ENCODE measurements at regions of chr3 and their contacts with region 1.

Region 1: GRCh38 chr3:43638594-43639447 is 17.0 kb upstream of the ANO10 start:
- DNase-seq: peak; percentile 79
- H3K4me3 Mint-ChIP-seq: peak overlapping the region; percentile 55
- H3K27ac Mint-ChIP-seq: peak overlapping the region; percentile 69
- H3K4me1 Mint-ChIP-seq: peaks cover 8% of the 10 kb centered on the region
- H3K27me3 Mint-ChIP-seq: no peaks in the 10 kb centered on the region
- CTCF ChIP-seq: peak; percentile 49

Region 2: DNA sequence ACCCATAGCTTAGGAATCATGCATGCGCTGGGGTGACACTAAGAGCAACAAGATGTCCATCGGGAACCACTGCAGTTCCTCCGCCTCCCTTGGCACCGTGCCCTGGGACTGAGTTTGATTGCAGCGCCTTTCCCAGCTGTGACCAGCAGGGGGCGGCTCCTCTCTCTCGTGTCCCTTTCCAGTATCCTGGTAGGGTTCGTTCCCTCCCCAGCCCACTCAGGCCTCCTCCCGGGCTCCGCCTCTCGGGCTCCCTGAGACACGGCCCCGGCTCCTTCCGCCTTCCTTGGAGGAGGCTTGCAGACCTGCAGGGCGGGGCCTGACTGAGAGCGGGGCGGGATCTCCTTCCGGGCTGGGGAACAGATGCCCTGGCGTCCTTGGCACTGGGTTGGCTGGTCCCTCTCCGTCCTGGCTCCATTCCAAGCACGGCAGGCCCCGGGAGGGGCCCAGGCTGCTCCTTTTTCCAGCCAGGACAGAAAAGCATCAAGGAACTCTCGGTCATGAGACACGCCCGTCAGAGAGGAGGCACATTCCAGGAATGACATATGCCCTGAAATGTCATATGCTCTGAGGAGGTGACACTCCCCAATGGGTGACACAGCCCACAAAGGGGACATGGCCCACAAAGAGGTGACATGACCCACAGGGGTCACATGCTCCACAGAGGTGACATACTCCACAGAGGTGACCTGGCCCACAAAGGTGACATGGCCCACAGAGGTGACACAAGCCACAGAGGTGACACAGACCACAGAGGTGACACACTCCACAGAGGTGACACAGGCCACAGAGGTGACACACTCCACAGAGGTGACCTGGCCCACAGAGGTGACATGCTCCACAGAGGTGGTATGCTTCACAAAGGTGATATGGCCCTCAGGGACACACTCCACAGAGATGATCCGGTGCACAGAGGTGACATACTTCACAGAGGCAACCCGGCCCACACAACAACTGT is 130.9 kb after region 1 on chr3:
- CTCF ChIA-PET with region 1: no interaction called
- intact Hi-C with region 1: loop called (anchors 10 kb)
- DNase-seq: peak; percentile 98
- H3K4me3 Mint-ChIP-seq: peak overlapping the region; percentile 69
- H3K27ac Mint-ChIP-seq: peak overlapping the region; percentile 65
- H3K4me1 Mint-ChIP-seq: peaks cover 48% of the 10 kb centered on the region
- H3K27me3 Mint-ChIP-seq: no peaks in the 10 kb centered on the region
- CTCF ChIP-seq: peak; percentile 87